ENCODE measurements at regions of chr18 and their contacts with region 1.

Region 1: DNA sequence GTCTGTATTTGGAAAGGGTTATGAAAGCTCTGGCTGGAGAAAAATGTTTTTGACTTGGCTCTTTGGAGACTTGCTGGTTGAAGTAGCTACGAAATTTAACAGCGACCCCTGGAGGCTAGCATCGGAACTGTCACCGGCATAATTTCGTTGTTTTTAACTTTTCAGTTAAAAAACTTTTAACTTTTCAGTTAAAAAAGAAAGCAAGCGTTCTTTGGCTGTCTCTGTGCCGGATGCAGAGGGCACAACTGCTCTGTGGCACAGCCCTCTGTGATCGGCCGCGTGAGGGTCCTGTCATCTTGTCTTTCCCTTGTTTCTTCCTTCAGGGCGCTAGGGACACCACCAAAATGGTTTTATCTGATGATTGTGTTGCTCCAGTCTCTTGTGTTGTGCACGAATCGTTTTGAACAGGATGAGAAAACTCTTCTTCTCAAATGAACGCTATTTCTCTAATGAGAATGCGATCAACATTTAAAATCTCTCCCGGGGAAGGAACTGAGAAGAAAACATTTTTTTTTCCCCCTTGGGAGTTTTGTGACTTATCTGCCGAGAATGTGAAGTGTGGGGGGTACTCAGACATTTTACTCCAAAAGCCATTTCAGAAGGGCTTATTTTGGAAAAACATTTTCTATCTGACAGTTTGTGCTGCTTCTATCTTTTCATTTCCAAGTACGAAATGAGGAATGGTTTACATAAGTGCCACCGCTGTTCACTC is 57.1 kb downstream of the ADCYAP1 start:
- DNase-seq: peak; percentile 26 to 48
- H3K4me3 ChIP-seq: no peak overlapping the region
- H3K27ac ChIP-seq: peak overlapping the region in 1 of 3 donors; percentile 62
- H3K4me1 ChIP-seq: peaks cover 0 to 4% of the 10 kb centered on the region in 2 donors
- H3K27me3 ChIP-seq: no peaks in the 10 kb centered on the region
- CTCF ChIP-seq: peak; percentile 59 to 99 (median 76)
- POLR2A ChIP-seq: no peak

Region 2: DNA sequence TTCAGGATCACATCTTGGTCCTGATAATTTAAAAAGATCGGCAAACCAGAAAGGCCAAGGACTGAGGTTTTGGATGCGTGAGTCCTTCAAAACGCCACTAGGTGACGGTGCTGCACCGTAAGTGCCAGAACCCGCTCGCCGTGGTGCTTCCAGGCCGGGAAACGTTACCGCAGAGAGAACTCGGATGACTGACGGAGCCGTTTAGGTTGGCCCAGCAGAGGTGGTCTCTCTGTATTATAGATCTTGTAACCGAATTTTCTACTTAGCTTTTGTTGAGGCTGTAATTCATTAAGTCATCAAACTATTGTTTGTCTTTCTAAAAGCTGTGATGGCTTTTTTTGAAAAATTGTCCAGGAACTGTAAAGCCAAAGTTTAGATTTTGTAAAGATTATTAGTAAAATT is 96.9 kb before region 1 on chr18:
- intact Hi-C with region 1: loop called (anchors 10 kb)
- DNase-seq: peak; percentile 60 to 72
- H3K4me3 ChIP-seq: no peak overlapping the region
- H3K27ac ChIP-seq: no peak overlapping the region
- H3K4me1 ChIP-seq: peaks cover 9 to 17% of the 10 kb centered on the region in 2 donors
- H3K27me3 ChIP-seq: no peaks in the 10 kb centered on the region
- CTCF ChIP-seq: peak; percentile 92 to 100 (median 97)
- POLR2A ChIP-seq: no peak

Region 3: GRCh38 chr18:1104181-1104881 is 142.5 kb after region 1 on chr18:
- intact Hi-C with region 1: no loop called
- DNase-seq: no peak
- H3K4me3 ChIP-seq: no peak overlapping the region
- H3K27ac ChIP-seq: no peak overlapping the region
- H3K4me1 ChIP-seq: no peaks in the 10 kb centered on the region
- H3K27me3 ChIP-seq: no peaks in the 10 kb centered on the region
- CTCF ChIP-seq: no peak
- POLR2A ChIP-seq: no peak